Transverse colon (tissue), 4 donors: ENCODE measurements at regions of chr5 and their contacts with region 1.

Region 1: DNA sequence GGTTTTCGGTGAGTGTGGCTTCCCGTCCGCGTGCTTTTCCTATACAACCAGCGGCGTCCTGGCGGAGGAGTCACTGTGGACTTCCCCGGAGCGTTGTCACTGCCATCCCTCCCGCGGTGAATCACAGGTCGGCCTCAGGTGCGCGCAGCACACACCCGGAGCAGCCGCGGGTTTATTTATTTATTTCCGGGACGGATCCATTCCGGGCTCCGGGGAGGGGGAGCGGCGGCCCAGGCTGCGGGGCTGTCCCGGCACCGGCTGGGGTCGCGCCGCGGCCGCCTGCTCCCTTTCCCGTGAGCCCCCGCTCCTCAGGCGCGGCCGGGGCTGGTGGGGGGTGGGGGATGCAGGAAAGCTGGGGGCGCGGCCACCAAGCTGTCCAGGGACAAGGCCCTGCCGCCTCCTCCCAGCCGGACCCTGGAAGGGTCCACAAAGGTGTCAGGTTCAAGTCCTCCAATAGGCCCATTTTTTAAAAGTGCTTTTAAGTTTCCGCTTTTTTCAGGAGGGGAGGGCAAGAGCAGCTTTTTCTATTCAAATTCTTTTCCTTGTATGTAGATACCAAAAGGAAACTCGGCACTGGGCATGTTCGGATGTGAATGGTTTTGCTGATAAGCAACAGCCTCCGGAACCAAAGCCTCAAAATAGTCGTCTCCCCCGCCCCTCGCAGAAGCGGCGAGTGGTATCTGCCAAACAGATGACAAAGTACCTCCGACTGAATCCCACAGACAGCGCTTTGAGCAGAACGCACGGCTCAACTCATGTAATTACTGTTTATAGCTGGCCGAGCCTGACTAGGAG is 192.5 kb downstream of the CD180 start:
- DNase-seq: peak; percentile 92
- H3K4me3 ChIP-seq: peak overlapping the region; percentile 22 to 74 (median 54)
- H3K27ac ChIP-seq: peak overlapping the region; percentile 85 to 92 (median 90)
- H3K4me1 ChIP-seq: peaks cover 9 to 48% (median 31%) of the 10 kb centered on the region in 4 donors
- H3K27me3 ChIP-seq: no peaks in the 10 kb centered on the region
- CTCF ChIP-seq: peak in 1 of 5 experiments; percentile 5
- EP300 ChIP-seq: peak; percentile 1
- POLR2A ChIP-seq: peak; percentile 79

Region 2: GRCh38 chr5:67050136-67050535 is 46.0 kb after region 1 on chr5:
- in situ Hi-C with region 1: no loop called
- intact Hi-C with region 1: no loop called
- DNase-seq: peak; percentile 39
- H3K4me3 ChIP-seq: no peak overlapping the region
- H3K27ac ChIP-seq: peak overlapping the region; percentile 51 to 78 (median 70)
- H3K4me1 ChIP-seq: peaks cover 3 to 54% (median 18%) of the 10 kb centered on the region in 4 donors
- H3K27me3 ChIP-seq: no peaks in the 10 kb centered on the region
- CTCF ChIP-seq: peak in 1 of 5 experiments; percentile 19
- EP300 ChIP-seq: no peak
- POLR2A ChIP-seq: peak; percentile 31

Region 3: GRCh38 chr5:67094476-67095300 is 90.6 kb after region 1 on chr5:
- in situ Hi-C with region 1: no loop called
- intact Hi-C with region 1: loop called (anchors 5 kb)
- DNase-seq: no peak
- H3K4me3 ChIP-seq: no peak overlapping the region
- H3K27ac ChIP-seq: peak overlapping the region; percentile 59 to 76 (median 68)
- H3K4me1 ChIP-seq: peaks cover 9 to 51% (median 28%) of the 10 kb centered on the region in 4 donors
- H3K27me3 ChIP-seq: no peaks in the 10 kb centered on the region
- CTCF ChIP-seq: no peak
- EP300 ChIP-seq: no peak
- POLR2A ChIP-seq: no peak

Region 4: GRCh38 chr5:67246108-67246507 is 242.0 kb after region 1 on chr5:
- in situ Hi-C with region 1: no loop called
- intact Hi-C with region 1: no loop called
- DNase-seq: no peak
- H3K4me3 ChIP-seq: no peak overlapping the region
- H3K27ac ChIP-seq: peak overlapping the region; percentile 3 to 45 (median 22)
- H3K4me1 ChIP-seq: peaks cover 0 to 18% (median 13%) of the 10 kb centered on the region in 4 donors
- H3K27me3 ChIP-seq: no peaks in the 10 kb centered on the region
- CTCF ChIP-seq: peak; percentile 75 to 88 (median 81)
- EP300 ChIP-seq: no peak
- POLR2A ChIP-seq: no peak

Region 5: DNA sequence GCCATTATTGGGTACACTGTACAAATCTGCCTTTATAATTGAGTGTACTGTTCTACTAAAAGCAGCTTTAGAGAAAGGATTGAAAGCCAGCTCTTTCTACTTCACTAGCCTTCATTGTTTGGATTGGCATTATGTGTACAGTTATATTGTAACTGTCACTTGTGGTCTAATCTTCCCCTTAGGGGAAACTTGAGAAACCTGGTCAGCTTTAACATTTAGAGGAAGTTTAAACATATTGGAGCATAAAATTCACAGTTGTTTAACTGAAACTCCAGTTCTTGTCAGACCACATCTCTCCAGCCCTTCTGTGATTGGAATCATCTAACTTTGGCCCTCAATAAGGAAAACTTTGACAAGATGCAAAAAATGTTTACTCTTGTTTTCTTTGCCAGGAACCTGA is 1236.1 kb after region 1 on chr5:
- in situ Hi-C with region 1: no loop called
- intact Hi-C with region 1: loop called (anchors 10 kb)
- DNase-seq: no peak
- H3K4me3 ChIP-seq: no peak overlapping the region
- H3K27ac ChIP-seq: peak overlapping the region; percentile 60 to 72 (median 66)
- H3K4me1 ChIP-seq: peaks cover 17 to 88% (median 55%) of the 10 kb centered on the region in 4 donors
- H3K27me3 ChIP-seq: no peaks in the 10 kb centered on the region
- CTCF ChIP-seq: no peak
- EP300 ChIP-seq: no peak
- POLR2A ChIP-seq: peak; percentile 9